Thyroid gland (tissue), 4 donors: ENCODE measurements at regions of chr4 and their contacts with region 1.

Region 1: DNA sequence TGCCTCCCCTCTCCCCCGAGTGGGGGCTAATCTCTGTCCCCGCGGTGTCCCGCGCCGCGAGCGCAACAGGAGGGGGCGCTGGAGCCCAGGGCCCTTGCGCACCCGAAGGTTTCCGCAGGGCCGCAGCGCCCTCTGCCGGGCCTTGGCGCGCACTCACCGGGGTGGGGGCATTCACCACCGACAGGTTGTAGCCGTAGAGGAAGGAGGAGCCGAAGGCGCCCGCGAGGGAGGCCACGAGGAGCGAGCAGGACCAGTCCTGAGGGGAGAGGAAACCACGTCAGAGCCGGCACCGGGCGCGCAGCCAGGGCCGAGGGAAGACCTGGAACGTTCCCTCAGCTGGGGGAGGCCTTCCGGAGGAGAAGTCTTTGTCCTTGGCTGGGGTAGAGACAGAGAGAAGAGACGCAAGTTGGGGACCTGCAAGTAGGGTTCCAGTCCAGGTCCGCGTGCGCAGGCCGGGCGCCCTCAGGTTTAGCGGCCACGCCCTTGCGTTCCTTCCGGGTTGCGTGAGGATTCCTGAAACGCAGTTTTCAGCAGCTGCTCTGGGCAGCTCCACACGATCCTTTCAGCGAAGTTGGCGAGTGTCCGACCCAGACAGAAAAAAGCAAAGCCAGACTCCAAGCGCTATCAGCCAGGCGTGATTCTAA is 2.4 kb downstream of the SLC2A9 start:
- DNase-seq: peak; percentile 99
- H3K4me3 ChIP-seq: peak overlapping the region in 1 of 3 donors; percentile 37
- H3K27ac ChIP-seq: peak overlapping the region; percentile 82 to 93 (median 92)
- H3K4me1 ChIP-seq: peaks cover 30 to 51% of the 10 kb centered on the region in 2 donors
- H3K27me3 ChIP-seq: no peaks in the 10 kb centered on the region
- CTCF ChIP-seq: peak; percentile 94 to 100 (median 100)
- POLR2A ChIP-seq: peak in 1 of 2 donors; percentile 87

Region 2: DNA sequence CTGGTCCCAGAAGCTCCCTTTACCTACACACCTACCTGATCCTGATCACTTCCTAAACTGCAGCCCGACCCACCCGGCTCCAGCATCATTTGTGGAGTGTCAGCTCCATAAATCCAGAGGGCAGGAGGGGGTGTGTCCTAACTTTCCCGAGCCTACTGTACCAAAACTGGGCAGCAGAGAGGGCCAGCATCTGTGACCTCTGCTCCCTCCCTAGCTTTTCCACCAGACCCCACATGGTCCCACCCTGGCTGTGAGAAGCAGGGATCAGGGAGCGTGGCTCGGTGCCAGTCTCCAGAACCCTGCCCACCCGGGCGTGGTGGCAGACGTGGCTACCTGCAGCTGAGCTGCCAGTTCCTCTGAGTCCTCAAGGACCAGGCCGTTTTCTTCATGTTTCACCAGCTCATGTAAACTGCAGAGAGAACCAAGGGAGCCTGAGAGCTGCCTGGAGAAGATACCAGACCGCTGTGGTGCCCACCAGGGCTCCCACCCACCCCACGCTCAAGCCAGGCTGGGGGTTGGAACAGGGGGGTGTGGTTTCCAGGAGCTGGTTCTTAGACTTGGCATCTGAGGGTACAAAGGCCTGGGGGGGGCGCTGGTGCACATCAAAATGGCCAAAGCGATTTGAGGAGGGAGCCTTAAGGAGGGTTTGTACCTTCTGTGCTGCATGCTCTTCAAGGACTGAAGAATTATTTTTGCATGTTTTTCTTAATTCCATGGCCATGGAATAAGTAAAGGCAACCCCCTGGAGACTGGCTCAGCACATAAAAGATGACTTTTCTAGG is 314.2 kb before region 1 on chr4:
- intact Hi-C with region 1: loop called (anchors 10 kb)
- DNase-seq: no peak
- H3K4me3 ChIP-seq: no peak overlapping the region
- H3K27ac ChIP-seq: no peak overlapping the region
- H3K4me1 ChIP-seq: no peaks in the 10 kb centered on the region
- H3K27me3 ChIP-seq: no peaks in the 10 kb centered on the region
- CTCF ChIP-seq: no peak
- POLR2A ChIP-seq: no peak

Region 3: GRCh38 chr4:10063544-10064300 is 44.8 kb after region 1 on chr4:
- intact Hi-C with region 1: loop called (anchors 5 kb)
- DNase-seq: peak; percentile 89 to 91
- H3K4me3 ChIP-seq: no peak overlapping the region
- H3K27ac ChIP-seq: peak overlapping the region; percentile 37 to 62 (median 47)
- H3K4me1 ChIP-seq: peaks cover 5 to 12% of the 10 kb centered on the region in 2 donors
- H3K27me3 ChIP-seq: no peaks in the 10 kb centered on the region
- CTCF ChIP-seq: peak in 5 of 6 experiments; percentile 17 to 93 (median 83)
- POLR2A ChIP-seq: no peak

Region 4: DNA sequence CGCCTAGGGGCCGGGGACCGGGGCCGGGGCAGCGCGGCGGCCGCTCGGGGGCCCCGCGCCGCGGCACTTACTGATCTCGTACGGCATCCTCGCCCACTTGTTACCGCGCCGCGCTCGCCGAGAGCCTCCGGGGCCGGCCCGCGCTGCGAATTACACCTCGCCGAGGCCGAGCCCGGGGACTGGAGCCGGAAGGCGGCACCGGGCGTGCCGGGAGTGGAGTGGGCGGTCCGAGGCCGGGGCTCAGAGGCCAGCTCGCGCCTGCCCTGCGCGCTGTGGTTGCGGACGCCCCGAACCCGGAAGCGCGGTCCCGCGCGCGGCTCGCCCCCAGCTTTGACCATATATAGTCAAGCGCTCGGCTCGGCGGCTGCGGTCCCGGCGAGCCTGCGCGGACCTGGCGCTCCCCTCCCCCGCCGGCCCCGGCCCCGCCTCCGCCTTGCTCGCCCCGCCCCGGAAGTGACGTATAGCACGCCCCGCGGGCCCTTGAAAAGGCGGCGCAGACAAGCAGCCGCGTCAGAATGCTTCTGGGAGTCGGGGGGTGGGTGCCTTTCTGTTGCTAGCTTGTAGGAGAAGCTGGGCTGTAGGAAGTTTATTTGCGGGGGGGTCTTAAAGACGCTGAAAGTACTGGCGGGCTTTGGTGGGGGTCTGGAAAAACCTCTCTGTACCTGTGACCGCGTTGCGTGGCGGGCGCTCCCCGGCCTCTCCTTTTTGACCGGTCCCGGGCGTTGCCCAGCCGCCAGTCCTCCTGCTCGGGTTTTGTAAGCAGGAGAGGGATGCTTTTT is 97.8 kb after region 1 on chr4 and contains the start of gene WDR1:
- intact Hi-C with region 1: loop called (anchors 10 kb)
- DNase-seq: peak; percentile 96 to 97
- H3K4me3 ChIP-seq: peak within 1 kb of the TSS; percentile 4 to 69 (median 50)
- H3K27ac ChIP-seq: peak within 1 kb of the TSS; percentile 97 to 100 (median 99)
- H3K4me1 ChIP-seq: peaks cover 48 to 69% of the 10 kb centered on the region in 2 donors
- H3K27me3 ChIP-seq: no peaks in the 10 kb centered on the region
- CTCF ChIP-seq: no peak
- POLR2A ChIP-seq: peak; percentile 92 to 97
- total RNA-seq, gene WDR1: 122 to 238 (median 213) TPM

Region 5: GRCh38 chr4:10403633-10404445 is 384.9 kb after region 1 on chr4:
- intact Hi-C with region 1: loop called (anchors 10 kb)
- DNase-seq: peak in 1 of 2 donors; percentile 21
- H3K4me3 ChIP-seq: no peak overlapping the region
- H3K27ac ChIP-seq: no peak overlapping the region
- H3K4me1 ChIP-seq: no peaks in the 10 kb centered on the region
- H3K27me3 ChIP-seq: no peaks in the 10 kb centered on the region
- CTCF ChIP-seq: peak in 4 of 6 experiments; percentile 53 to 77 (median 64)
- POLR2A ChIP-seq: no peak